ENCODE measurements at regions of chr6 and their contacts with region 1.

Region 1: DNA sequence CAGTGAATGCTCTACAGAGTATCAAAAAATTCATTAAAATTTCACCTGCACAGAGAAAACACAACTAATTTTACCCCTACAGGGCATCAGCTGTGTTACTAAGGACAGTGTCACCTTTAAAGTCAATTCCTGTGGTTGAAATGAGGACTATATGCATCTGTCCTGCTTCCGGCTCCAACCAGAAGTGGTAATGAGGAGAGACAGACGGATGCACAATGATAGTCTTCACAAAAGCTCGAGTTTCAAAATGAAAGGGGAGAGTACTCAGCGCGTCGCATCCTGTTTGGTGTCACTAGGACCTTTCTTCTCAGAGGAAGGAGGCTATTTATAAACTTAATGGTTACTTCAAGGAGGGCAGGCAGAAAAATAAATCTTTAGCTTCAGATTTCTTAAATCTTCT is 86.5 kb downstream of the LYRM4 start:
- DNase-seq: peak; percentile 84
- H3K4me3 Mint-ChIP-seq: peak overlapping the region; percentile 48
- H3K27ac Mint-ChIP-seq: peak overlapping the region; percentile 77
- H3K4me1 Mint-ChIP-seq: peaks cover 51% of the 10 kb centered on the region
- H3K27me3 Mint-ChIP-seq: no peaks in the 10 kb centered on the region

Region 2: DNA sequence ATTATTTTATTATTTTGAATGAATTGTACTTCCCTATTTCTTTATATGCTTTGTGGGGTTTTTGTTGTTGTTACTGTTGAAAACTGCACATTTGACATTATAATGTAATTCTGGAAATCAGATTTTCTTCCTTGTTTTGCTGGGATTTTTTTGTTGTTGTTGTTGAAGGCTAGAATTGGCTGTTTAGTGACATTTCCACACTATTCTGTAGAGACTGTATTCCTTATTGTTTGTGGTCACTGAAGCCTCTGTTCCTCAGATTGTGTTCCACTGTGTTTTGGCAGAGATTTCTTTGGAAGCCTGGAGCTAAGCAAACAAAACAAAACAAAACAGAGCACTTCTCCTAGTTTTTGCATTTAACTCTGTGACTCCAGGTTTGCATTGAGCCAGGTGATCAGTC is 345.2 kb before region 1 on chr6:
- CTCF ChIA-PET with region 1: no interaction called
- intact Hi-C with region 1: no loop called
- DNase-seq: no peak
- H3K4me3 Mint-ChIP-seq: no peak overlapping the region
- H3K27ac Mint-ChIP-seq: no peak overlapping the region
- H3K4me1 Mint-ChIP-seq: peaks cover 2% of the 10 kb centered on the region
- H3K27me3 Mint-ChIP-seq: no peaks in the 10 kb centered on the region

Region 3: GRCh38 chr6:5003604-5004372 is 170.5 kb before region 1 on chr6 and contains the start of gene RPP40:
- CTCF ChIA-PET with region 1: no interaction called
- intact Hi-C with region 1: loop called (anchors 5 kb)
- DNase-seq: peak; percentile 98
- H3K4me3 Mint-ChIP-seq: peak within 1 kb of the TSS; percentile 90
- H3K27ac Mint-ChIP-seq: peak within 1 kb of the TSS; percentile 91
- H3K4me1 Mint-ChIP-seq: peaks cover 11% of the 10 kb centered on the region
- H3K27me3 Mint-ChIP-seq: no peaks in the 10 kb centered on the region
- total RNA-seq, gene RPP40: 8.2 to 9.8 TPM

Region 4: DNA sequence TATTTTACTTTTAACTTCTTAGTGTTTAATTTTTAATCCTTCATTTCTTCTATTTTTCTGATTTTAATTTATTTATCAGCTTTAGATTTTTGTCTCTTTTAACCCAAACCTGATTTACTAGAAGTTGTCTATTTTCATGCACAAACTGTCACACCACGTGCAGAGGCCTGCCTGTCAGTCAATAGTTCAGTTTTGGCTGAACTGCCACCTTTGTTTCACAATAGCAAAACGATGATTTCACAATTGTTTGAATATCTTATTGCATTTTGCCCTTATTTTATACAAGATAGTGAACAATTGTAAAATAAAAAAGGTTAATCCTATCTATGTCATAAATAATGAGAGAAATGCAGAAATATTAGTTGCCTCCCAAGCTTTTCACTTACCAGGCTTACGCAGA is 113.1 kb before region 1 on chr6:
- CTCF ChIA-PET with region 1: no interaction called
- intact Hi-C with region 1: no loop called
- DNase-seq: no peak
- H3K4me3 Mint-ChIP-seq: no peak overlapping the region
- H3K27ac Mint-ChIP-seq: no peak overlapping the region
- H3K4me1 Mint-ChIP-seq: no peaks in the 10 kb centered on the region
- H3K27me3 Mint-ChIP-seq: no peaks in the 10 kb centered on the region

Region 5: GRCh38 chr6:5199283-5199682 is 25.0 kb after region 1 on chr6:
- CTCF ChIA-PET with region 1: interaction called, 3 read pairs
- intact Hi-C with region 1: loop called (anchors 1 kb)
- DNase-seq: no peak
- H3K4me3 Mint-ChIP-seq: no peak overlapping the region
- H3K27ac Mint-ChIP-seq: peak overlapping the region; percentile 5
- H3K4me1 Mint-ChIP-seq: peaks cover 14% of the 10 kb centered on the region
- H3K27me3 Mint-ChIP-seq: no peaks in the 10 kb centered on the region

Region 6: DNA sequence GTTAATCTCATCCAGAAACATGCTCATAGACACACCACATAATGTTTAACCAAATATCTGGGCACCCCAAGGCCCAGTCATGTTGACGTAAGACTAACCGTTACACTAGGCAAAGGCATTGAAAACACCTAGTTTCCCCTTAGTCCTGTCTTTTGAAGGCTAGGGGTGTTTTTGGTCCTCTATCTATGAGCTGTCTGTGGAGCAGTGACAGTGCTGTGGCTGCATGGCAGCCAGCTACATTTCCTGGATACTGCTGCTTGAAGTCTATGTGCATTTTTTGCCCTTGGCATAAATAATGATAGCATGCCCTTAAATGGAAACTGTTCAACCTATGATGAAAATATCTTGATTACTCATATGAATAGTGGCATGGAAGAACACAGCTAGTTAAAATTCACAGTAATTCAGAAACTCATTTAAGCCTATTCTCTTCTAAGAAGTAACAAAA is 105.7 kb after region 1 on chr6:
- CTCF ChIA-PET with region 1: no interaction called
- intact Hi-C with region 1: loop called (anchors 1 kb)
- DNase-seq: peak; percentile 69
- H3K4me3 Mint-ChIP-seq: no peak overlapping the region
- H3K27ac Mint-ChIP-seq: peak overlapping the region; percentile 83
- H3K4me1 Mint-ChIP-seq: peaks cover 37% of the 10 kb centered on the region
- H3K27me3 Mint-ChIP-seq: no peaks in the 10 kb centered on the region

Region 7: DNA sequence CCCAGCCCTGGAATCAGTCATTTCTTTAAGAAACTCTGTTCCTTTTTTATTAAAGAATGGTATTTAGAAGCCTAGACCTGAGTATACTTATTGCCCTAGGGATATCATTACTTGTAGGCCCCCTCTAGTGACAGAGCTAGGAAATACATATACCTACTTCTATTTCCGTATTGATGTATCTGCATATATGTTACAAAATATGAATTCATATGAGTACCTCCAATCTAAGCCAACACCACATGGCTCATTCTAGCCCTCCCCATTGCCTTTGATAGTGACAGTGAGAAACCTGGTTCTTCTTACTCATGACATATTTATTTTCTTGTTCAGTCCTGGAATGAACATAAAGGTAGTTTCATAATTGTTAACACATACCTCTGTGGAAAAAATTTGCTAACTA is 224.3 kb after region 1 on chr6:
- CTCF ChIA-PET with region 1: no interaction called
- intact Hi-C with region 1: loop called (anchors 1 kb)
- DNase-seq: peak; percentile 64
- H3K4me3 Mint-ChIP-seq: no peak overlapping the region
- H3K27ac Mint-ChIP-seq: no peak overlapping the region
- H3K4me1 Mint-ChIP-seq: peaks cover 22% of the 10 kb centered on the region
- H3K27me3 Mint-ChIP-seq: no peaks in the 10 kb centered on the region

Measured in activated naive CD4-positive, alpha-beta T cell treated with anti-CD3 and anti-CD28 coated beads for 36 hours (primary cell).